ENCODE measurements at regions of chr3 and their contacts with region 1.

Region 1: GRCh38 chr3:135688003-135688402 is 277.5 kb upstream of the PPP2R3A start:
- DNase-seq: no peak
- H3K4me3 ChIP-seq: no peak overlapping the region
- H3K4me3 Mint-ChIP-seq: no peak overlapping the region
- H3K27ac ChIP-seq: no peak overlapping the region
- H3K27ac Mint-ChIP-seq: no peak overlapping the region
- H3K4me1 ChIP-seq: no peaks in the 10 kb centered on the region
- H3K4me1 Mint-ChIP-seq: no peaks in the 10 kb centered on the region
- H3K27me3 ChIP-seq: no peaks in the 10 kb centered on the region
- H3K27me3 Mint-ChIP-seq: peaks cover 0 to 1% of the 10 kb centered on the region in 2 donors

Region 2: GRCh38 chr3:135706758-135707375 is 18.9 kb after region 1 on chr3:
- CTCF ChIA-PET with region 1: no interaction called
- POLR2A ChIA-PET with region 1: no interaction called
- intact Hi-C with region 1: loop called (anchors 1 kb)
- DNase-seq: no peak
- H3K4me3 ChIP-seq: no peak overlapping the region
- H3K4me3 Mint-ChIP-seq: no peak overlapping the region
- H3K27ac ChIP-seq: no peak overlapping the region
- H3K27ac Mint-ChIP-seq: no peak overlapping the region
- H3K4me1 ChIP-seq: no peaks in the 10 kb centered on the region
- H3K4me1 Mint-ChIP-seq: no peaks in the 10 kb centered on the region
- H3K27me3 ChIP-seq: no peaks in the 10 kb centered on the region
- H3K27me3 Mint-ChIP-seq: no peaks in the 10 kb centered on the region

Region 3: GRCh38 chr3:135811651-135812050 is 123.6 kb after region 1 on chr3:
- CTCF ChIA-PET with region 1: no interaction called
- POLR2A ChIA-PET with region 1: no interaction called
- intact Hi-C with region 1: no loop called
- DNase-seq: no peak
- H3K4me3 ChIP-seq: no peak overlapping the region
- H3K4me3 Mint-ChIP-seq: no peak overlapping the region
- H3K27ac ChIP-seq: no peak overlapping the region
- H3K27ac Mint-ChIP-seq: no peak overlapping the region
- H3K4me1 ChIP-seq: no peaks in the 10 kb centered on the region
- H3K4me1 Mint-ChIP-seq: peaks cover 0 to 3% (median 0%) of the 10 kb centered on the region in 4 donors
- H3K27me3 ChIP-seq: no peaks in the 10 kb centered on the region
- H3K27me3 Mint-ChIP-seq: peaks cover 3% of the 10 kb centered on the region in 2 donors

Region 4: GRCh38 chr3:136042608-136043221 is 354.7 kb after region 1 on chr3:
- CTCF ChIA-PET with region 1: no interaction called
- POLR2A ChIA-PET with region 1: no interaction called
- intact Hi-C with region 1: no loop called
- DNase-seq: peak in 2 of 5 donors; percentile 3 to 9
- H3K4me3 ChIP-seq: no peak overlapping the region
- H3K4me3 Mint-ChIP-seq: no peak overlapping the region
- H3K27ac ChIP-seq: no peak overlapping the region
- H3K27ac Mint-ChIP-seq: no peak overlapping the region
- H3K4me1 ChIP-seq: no peaks in the 10 kb centered on the region
- H3K4me1 Mint-ChIP-seq: no peaks in the 10 kb centered on the region
- H3K27me3 ChIP-seq: peaks cover 6% of the 10 kb centered on the region
- H3K27me3 Mint-ChIP-seq: peaks cover 14% of the 10 kb centered on the region in 2 donors

Measured in CD4-positive, alpha-beta memory T cell (primary cell).